ENCODE measurements at regions of chr1 and their contacts with region 1.

Region 1: GRCh38 chr1:172398970-172399755 is 21.3 kb upstream of the C1orf105 start:
- DNase-seq: peak; percentile 48
- ATAC-seq: peak; percentile 87 to 92

Region 2: DNA sequence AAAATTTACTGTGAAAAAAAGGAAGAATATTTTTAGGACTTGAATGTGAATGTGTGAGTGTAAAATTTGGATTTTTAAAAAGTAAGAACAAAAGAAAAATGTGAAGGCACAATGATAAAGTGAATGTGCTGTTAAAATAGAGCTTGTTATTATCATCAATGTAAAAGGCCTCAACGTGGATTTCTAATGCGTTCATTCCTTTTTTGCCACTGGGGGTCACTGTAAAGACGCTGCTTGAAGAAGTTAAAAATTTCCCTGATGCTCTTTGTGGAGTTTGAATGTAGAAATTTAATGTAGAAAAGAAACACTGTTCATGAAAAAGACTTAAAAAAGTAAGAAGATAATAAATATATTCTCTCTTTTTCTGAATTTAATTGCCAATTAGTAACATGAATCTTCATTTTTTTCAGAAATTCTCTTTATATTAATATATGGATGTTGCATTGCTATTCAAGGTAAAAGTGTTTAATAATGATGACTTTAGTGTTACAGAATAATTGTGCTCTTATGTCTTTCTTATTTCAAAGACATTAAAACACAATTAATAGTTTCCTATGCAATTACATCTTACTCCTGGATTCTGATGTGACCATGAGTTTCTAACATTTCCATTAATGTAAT is 396.3 kb before region 1 on chr1:
- intact Hi-C with region 1: loop called in 1 of 2 experiments (anchors 5 kb)
- DNase-seq: no peak
- ATAC-seq: no peak

Region 3: GRCh38 chr1:172089768-172090510 is 309.2 kb before region 1 on chr1:
- intact Hi-C with region 1: loop called in 1 of 2 experiments (anchors 2 kb)
- DNase-seq: peak; percentile 35
- ATAC-seq: peak; percentile 70 to 85

Region 4: GRCh38 chr1:172286629-172287076 is 112.5 kb before region 1 on chr1:
- intact Hi-C with region 1: loop called in 1 of 2 experiments (anchors 5 kb)
- DNase-seq: no peak
- ATAC-seq: peak; percentile 80 to 95

Region 5: GRCh38 chr1:172421974-172422604 is 22.9 kb after region 1 on chr1:
- intact Hi-C with region 1: loop called in 1 of 2 experiments (anchors 2 kb)
- DNase-seq: peak; percentile 33
- ATAC-seq: peak; percentile 66 to 79

Measured in left cardiac atrium (tissue), 4 donors.